Activated CD4-positive, alpha-beta memory T cell treated with anti-CD3 and anti-CD28 coated beads, Interleukin-2, amount 10 ng/mL, durations not matched to agents 7 days and 5 days (primary cell): ENCODE measurements at regions of chr14 and their contacts with region 1.

Region 1: DNA sequence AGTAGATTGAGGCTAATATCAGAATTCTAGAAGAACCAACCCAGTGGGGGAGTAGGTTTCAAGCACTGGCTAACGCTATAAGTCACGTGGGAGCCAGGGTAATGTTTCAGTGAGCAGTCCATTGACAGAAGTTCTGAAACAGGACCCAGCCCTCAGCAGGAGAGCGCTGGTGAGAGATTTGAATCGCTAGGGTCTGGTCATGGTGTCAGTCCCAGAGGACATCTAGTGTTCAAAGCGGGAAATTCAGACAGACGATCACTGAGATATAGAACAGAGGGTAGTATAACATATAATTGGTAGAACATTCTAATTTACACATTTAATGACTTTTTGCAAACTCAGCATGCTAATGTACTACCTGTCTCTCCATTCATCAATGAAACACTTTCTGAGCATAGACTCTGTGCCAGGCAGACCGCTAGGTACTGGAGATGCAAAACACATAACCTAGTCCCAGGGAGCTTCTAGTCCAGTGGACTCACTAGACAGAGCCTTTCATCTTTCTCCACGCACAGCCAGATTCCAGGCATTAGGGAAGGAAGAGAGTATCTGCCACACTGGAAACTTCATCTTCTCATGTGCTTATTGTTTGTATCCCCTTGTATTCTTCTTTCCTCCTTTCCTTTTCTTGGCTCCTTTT is 35.4 kb upstream of the RNASE3 start:
- DNase-seq: peak; percentile 58
- H3K4me3 Mint-ChIP-seq: no peak overlapping the region
- H3K27ac Mint-ChIP-seq: no peak overlapping the region
- H3K4me1 Mint-ChIP-seq: no peaks in the 10 kb centered on the region
- H3K27me3 Mint-ChIP-seq: peaks cover 22% of the 10 kb centered on the region

Region 2: DNA sequence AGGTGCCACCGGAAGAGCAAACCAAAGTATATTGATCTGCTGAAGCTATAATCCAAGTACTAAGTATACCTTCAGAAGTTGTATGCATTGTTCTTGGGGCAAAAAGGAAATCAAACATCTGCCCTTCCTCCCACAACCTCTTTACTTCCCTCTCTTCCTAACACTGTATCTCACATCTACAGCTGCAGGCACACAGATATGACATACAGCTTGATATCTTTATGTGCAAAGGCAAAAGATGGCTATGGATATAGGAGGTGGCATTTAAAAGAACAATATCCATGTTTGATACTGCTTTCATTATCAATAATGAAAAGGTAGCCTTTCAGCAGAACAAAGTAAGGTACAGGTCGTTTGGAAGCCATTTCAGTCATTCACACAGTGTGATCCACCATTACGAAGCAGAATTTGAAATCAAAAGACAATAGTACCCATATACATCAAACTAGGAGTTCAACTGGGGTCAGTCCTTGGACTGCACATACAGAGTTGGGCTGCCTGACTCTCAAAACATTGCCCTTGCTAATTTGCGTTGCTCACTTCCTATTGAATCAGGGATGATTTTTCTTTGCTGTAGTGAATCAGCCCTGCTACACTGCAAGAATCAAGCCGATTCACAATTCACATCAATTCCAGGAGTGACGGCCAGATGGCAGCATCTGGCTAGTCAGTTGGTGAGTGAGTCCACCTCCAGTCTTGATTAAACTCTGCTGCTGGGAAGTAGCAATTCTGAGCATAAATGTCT is 158.3 kb before region 1 on chr14:
- CTCF ChIA-PET with region 1: interaction called, 23 read pairs
- POLR2A ChIA-PET with region 1: no interaction called
- DNase-seq: peak; percentile 74
- H3K4me3 Mint-ChIP-seq: no peak overlapping the region
- H3K27ac Mint-ChIP-seq: no peak overlapping the region
- H3K4me1 Mint-ChIP-seq: peaks cover 18% of the 10 kb centered on the region
- H3K27me3 Mint-ChIP-seq: peaks cover 1% of the 10 kb centered on the region

Region 3: GRCh38 chr14:20811986-20812975 is 43.5 kb before region 1 on chr14:
- CTCF ChIA-PET with region 1: no interaction called
- POLR2A ChIA-PET with region 1: no interaction called
- DNase-seq: no peak
- H3K4me3 Mint-ChIP-seq: no peak overlapping the region
- H3K27ac Mint-ChIP-seq: no peak overlapping the region
- H3K4me1 Mint-ChIP-seq: no peaks in the 10 kb centered on the region
- H3K27me3 Mint-ChIP-seq: peaks cover 6% of the 10 kb centered on the region

Region 4: DNA sequence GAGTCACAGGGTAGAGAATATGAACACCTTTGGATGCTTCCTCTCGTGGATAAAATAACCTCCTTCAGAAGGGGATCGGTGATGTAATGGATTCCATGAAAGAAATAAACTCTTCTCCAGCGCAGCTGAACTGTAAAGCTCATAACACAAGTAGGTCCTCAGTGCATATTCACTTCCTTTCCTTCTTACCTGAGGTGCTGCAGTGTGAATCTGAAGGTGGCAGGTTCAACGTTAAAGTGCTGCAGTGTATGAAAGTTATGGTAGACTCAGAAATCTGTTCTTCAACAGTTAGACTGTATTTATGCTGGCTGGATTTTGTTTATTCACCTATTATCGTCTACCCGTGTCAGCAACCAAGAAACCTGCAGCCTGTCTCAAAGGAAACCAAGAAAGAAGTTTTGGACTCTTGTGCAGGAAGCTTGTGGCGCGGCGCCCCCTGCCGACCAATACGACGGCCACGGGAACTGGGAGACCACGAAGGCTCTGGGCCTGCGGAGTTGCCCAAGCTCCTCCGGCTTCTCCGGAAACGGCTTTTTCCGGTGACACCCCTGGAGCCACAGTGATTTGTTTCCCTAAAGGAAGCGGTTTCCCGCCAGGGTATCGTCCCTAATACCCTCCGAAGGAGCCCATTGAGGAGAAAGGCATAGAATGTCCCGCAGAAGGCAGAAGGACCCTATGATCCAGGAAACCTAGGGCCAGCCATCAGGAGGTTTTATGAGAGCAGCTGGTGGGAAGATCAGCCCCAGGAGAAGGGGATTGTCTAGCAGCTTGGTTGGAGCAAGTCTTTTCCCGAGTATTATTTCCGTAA is 17.8 kb after region 1 on chr14:
- CTCF ChIA-PET with region 1: interaction called, 52 read pairs
- POLR2A ChIA-PET with region 1: no interaction called
- DNase-seq: peak; percentile 82
- H3K4me3 Mint-ChIP-seq: no peak overlapping the region
- H3K27ac Mint-ChIP-seq: no peak overlapping the region
- H3K4me1 Mint-ChIP-seq: peaks cover 19% of the 10 kb centered on the region
- H3K27me3 Mint-ChIP-seq: peaks cover 25% of the 10 kb centered on the region

Region 5: GRCh38 chr14:20956376-20956976 is 100.7 kb after region 1 on chr14:
- CTCF ChIA-PET with region 1: interaction called, 13 read pairs
- POLR2A ChIA-PET with region 1: no interaction called
- DNase-seq: no peak
- H3K4me3 Mint-ChIP-seq: no peak overlapping the region
- H3K27ac Mint-ChIP-seq: peak overlapping the region; percentile 44
- H3K4me1 Mint-ChIP-seq: peaks cover 40% of the 10 kb centered on the region
- H3K27me3 Mint-ChIP-seq: peaks cover 17% of the 10 kb centered on the region